ENCODE measurements at regions of chr7 and their contacts with region 1.

Region 1: GRCh38 chr7:6706677-6707544 is at the start of gene ZNF12:
- DNase-seq: peak; percentile 92
- ATAC-seq: peak; percentile 96
- H3K4me3 ChIP-seq: peak within 1 kb of the TSS; percentile 91
- H3K27ac ChIP-seq: peak within 1 kb of the TSS; percentile 62
- H3K4me1 ChIP-seq: no peaks in the 10 kb centered on the region
- H3K27me3 ChIP-seq: no peaks in the 10 kb centered on the region
- CTCF ChIP-seq: no peak
- POLR2A ChIP-seq: peak; percentile 75
- RAD21 ChIP-seq: no peak
- total RNA-seq, gene ZNF12: 20.8 and 22.8 TPM in 2 replicates

Region 2: GRCh38 chr7:6729492-6730342 is 22.8 kb after region 1 on chr7:
- CTCF ChIA-PET with region 1: no interaction called
- POLR2A ChIA-PET with region 1: no interaction called
- dilution Hi-C with region 1: no loop called
- in situ Hi-C with region 1: no loop called
- intact Hi-C with region 1: loop called (anchors 1 kb)
- DNase-seq: peak; percentile 90
- ATAC-seq: peak; percentile 98
- H3K4me3 ChIP-seq: peak overlapping the region; percentile 82
- H3K27ac ChIP-seq: peak overlapping the region; percentile 82
- H3K4me1 ChIP-seq: peaks cover 2% of the 10 kb centered on the region
- H3K27me3 ChIP-seq: no peaks in the 10 kb centered on the region
- CTCF ChIP-seq: no peak
- POLR2A ChIP-seq: peak; percentile 70; the same call in 1 of the 2 replicates
- RAD21 ChIP-seq: no peak